ENCODE measurements at regions of chr6 and their contacts with region 1.

Region 1: GRCh38 chr6:29705389-29706231 is 17.6 kb upstream of the HLA-F start:
- DNase-seq: no peak
- H3K4me3 ChIP-seq: no peak overlapping the region
- H3K27ac ChIP-seq: peak overlapping the region in 2 of 8 donors; percentile 41 to 85
- H3K4me1 ChIP-seq: peaks cover 0 to 45% (median 19%) of the 10 kb centered on the region in 6 donors
- H3K27me3 ChIP-seq: peaks cover 0 to 18% (median 0%) of the 10 kb centered on the region in 7 donors
- CTCF ChIP-seq: peak; percentile 29 to 82 (median 65)
- POLR2A ChIP-seq: no peak

Region 2: GRCh38 chr6:29752451-29753308 is 47.1 kb after region 1 on chr6:
- intact Hi-C with region 1: loop called (anchors 5 kb)
- DNase-seq: peak; percentile 98
- H3K4me3 ChIP-seq: peak overlapping the region; percentile 61 to 76 (median 71)
- H3K27ac ChIP-seq: peak overlapping the region; percentile 89 to 96 (median 94)
- H3K4me1 ChIP-seq: peaks cover 16 to 55% (median 45%) of the 10 kb centered on the region in 6 donors
- H3K27me3 ChIP-seq: no peaks in the 10 kb centered on the region
- CTCF ChIP-seq: peak; percentile 95 to 100 (median 96)
- POLR2A ChIP-seq: peak in 1 of 3 donors; percentile 66

Region 3: DNA sequence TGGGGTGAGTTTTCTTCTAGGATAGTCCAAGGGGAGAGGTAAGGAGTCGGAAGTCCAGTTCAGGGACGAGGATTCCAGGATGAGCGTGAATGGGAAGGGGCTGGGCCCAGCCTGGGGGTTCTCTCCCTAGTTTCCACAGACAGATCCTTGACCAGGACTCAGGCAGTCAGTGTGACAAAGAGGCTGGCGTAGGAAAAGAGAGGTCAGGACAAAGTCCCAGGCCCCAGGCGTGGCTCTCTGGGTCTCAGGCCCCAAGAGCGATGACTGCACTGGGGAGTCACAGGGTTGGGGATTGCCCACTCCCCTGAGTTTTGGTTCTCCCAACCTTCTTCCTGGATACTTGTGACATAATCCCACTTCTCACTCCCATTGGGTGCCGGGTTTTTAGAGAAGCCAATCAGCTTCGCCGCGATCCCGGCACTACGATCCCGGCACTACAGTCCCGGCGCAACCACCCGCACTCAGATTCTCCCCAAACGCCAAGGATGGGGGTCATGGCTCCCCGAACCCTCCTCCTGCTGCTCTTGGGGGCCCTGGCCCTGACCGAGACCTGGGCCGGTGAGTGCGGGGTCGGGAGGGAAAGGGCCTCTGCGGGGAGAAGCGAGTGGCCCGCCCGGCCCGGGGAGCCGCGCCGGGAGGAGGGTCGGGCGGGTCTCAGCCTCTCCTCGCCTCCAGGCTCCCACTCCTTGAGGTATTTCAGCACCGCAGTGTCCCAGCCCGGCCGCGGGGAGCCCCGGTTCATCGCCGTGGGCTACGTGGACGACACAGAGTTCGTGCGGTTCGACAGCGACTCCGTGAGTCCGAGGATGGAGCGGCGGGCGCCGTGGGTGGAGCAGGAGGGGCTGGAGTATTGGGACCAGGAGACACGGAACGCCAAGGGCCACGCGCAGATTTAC is 553.8 kb after region 1 on chr6:
- intact Hi-C with region 1: no loop called
- DNase-seq: peak; percentile 87
- H3K4me3 ChIP-seq: peak overlapping the region; percentile 66 to 95 (median 85)
- H3K27ac ChIP-seq: peak overlapping the region; percentile 16 to 89 (median 78)
- H3K4me1 ChIP-seq: peaks cover 4 to 20% (median 14%) of the 10 kb centered on the region in 6 donors
- H3K27me3 ChIP-seq: peaks cover 0 to 25% (median 0%) of the 10 kb centered on the region in 7 donors
- CTCF ChIP-seq: peak in 6 of 11 experiments; percentile 7 to 53 (median 21)
- POLR2A ChIP-seq: no peak